ENCODE measurements at regions of chr5 and their contacts with region 1.

Region 1: DNA sequence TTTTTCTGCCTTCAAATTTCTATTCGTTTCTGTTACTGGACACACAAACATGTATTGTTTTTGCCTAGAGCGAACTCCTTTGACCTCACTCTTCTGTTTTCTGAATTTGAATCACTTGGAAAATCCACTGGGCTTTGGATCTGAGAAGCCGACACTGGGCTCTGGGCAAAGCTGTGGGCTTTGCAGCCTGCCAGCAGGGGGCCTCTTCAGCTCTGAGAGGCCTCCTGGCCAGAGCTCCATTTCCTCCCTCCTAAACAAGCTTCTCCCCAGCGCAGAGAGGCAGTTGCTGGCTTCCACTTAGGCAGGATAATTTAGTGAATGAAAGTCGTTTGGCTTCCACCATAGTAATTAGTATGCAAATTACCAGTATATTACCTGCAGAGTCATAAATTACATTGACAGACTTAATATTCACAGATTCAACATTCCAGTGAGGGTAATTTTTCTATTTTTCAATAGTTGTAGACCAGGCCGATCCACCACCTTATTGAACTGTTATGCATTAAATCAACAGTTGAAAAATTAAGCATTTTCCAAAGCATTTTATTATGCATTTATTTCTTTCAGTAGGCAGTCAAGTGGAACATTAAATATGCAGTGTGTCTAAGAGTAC is 104.0 kb upstream of the ZNF366 start:
- DNase-seq: peak; percentile 71 to 80
- ATAC-seq: peak; percentile 87

Region 2: GRCh38 chr5:72818866-72819534 is 207.8 kb after region 1 on chr5:
- intact Hi-C with region 1: loop called in 1 of 2 experiments (anchors 2 kb)
- DNase-seq: peak; percentile 60 to 82
- ATAC-seq: no peak

Measured in left colon (tissue), 2 donors.